ENCODE measurements at regions of chr12 and their contacts with region 1.

Region 1: DNA sequence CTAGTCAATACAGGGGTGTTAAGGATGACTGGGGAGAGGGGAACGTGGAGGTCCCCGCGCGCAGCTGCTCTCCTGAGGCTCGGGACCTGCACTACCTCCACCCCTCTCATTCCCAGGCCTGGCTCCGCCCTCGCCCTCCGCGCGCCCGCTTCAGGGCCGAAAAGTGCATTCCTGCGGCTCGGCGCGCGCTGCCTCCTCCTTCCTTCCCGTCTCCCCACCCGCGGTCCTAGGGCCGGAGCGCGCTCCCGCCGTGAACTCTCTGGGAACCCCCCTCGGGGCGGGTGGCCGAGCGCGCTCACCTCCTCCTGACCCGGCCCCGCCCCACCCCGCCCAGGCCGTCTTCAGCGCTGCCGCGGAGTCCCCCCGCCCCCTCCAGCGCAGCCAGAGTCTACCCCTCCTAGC is 11.2 kb downstream of the RARG start:
- H3K4me3 Mint-ChIP-seq: peak overlapping the region; percentile 87
- H3K27ac Mint-ChIP-seq: peak overlapping the region; percentile 96
- H3K4me1 Mint-ChIP-seq: peaks cover 91% of the 10 kb centered on the region
- H3K27me3 Mint-ChIP-seq: peaks cover 18% of the 10 kb centered on the region

Region 2: GRCh38 chr12:53180220-53180930 is 40.4 kb before region 1 on chr12 and contains the starts of genes CSAD and ZNF740:
- intact Hi-C with region 1: no loop called
- H3K4me3 Mint-ChIP-seq: peak within 1 kb of the TSS; percentile 86
- H3K27ac Mint-ChIP-seq: peak within 1 kb of the TSS; percentile 84
- H3K4me1 Mint-ChIP-seq: peaks cover 52% of the 10 kb centered on the region
- H3K27me3 Mint-ChIP-seq: no peaks in the 10 kb centered on the region

Region 3: GRCh38 chr12:53251477-53252348 is 30.9 kb after region 1 on chr12:
- intact Hi-C with region 1: loop called (anchors 2 kb)
- H3K4me3 Mint-ChIP-seq: peak overlapping the region; percentile 99
- H3K27ac Mint-ChIP-seq: peak overlapping the region; percentile 94
- H3K4me1 Mint-ChIP-seq: peaks cover 59% of the 10 kb centered on the region
- H3K27me3 Mint-ChIP-seq: no peaks in the 10 kb centered on the region

Region 4: DNA sequence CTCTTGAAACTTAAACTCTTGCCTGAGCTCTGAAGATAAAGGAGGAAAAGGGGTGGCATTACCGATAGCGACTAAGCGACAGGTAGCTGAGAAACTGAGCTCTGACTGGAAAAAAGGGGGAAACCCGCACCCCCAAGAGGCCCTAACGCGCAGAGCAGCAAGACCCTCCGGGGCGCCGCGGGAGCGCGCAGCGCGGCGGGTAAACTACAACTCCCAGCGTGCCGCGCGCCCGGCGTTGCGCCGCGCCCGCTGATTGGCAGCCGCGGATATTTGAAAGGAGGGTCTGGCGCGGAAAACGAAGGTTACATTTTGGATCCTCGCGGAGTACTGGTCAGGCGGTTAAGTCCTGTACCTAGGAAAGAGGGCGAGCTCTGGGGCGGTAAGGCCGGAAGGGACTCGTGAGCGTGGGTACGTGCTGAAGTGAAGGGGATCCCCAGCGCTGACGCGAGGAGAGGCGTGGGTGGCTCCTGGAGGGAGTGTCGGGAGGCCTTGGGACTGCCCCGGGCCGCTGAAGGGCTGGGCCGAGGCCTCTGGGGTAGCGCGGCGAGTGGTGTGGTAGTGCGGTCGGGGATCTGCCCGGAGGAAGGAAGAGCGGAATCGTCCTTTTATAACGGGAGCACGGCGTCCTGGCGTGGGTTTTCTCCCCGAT is 47.3 kb after region 1 on chr12 and contains the start of gene ESPL1:
- intact Hi-C with region 1: loop called (anchors 2 kb)
- H3K4me3 Mint-ChIP-seq: peak within 1 kb of the TSS; percentile 89
- H3K27ac Mint-ChIP-seq: peak within 1 kb of the TSS; percentile 88
- H3K4me1 Mint-ChIP-seq: peaks cover 58% of the 10 kb centered on the region
- H3K27me3 Mint-ChIP-seq: no peaks in the 10 kb centered on the region

Region 5: GRCh38 chr12:53295070-53295890 is 74.5 kb after region 1 on chr12 and contains the start of gene PFDN5:
- intact Hi-C with region 1: loop called (anchors 2 kb)
- H3K4me3 Mint-ChIP-seq: peak within 1 kb of the TSS; percentile 94
- H3K27ac Mint-ChIP-seq: peak within 1 kb of the TSS; percentile 92
- H3K4me1 Mint-ChIP-seq: peaks cover 50% of the 10 kb centered on the region
- H3K27me3 Mint-ChIP-seq: no peaks in the 10 kb centered on the region

Region 6: GRCh38 chr12:53476769-53477209 is 256.0 kb after region 1 on chr12:
- intact Hi-C with region 1: no loop called
- H3K4me3 Mint-ChIP-seq: no peak overlapping the region
- H3K27ac Mint-ChIP-seq: no peak overlapping the region
- H3K4me1 Mint-ChIP-seq: peaks cover 31% of the 10 kb centered on the region
- H3K27me3 Mint-ChIP-seq: no peaks in the 10 kb centered on the region

Measured in dendritic cell treated with granulocyte-macrophage colony-stimulating factor and Interleukin-4, amounts not matched to agents 40 ng/mL and 50 ng/mL, for 4 days (primary cell).